Stomach (tissue), 19 donors: ENCODE measurements at regions of chr1 and their contacts with region 1.

Region 1: DNA sequence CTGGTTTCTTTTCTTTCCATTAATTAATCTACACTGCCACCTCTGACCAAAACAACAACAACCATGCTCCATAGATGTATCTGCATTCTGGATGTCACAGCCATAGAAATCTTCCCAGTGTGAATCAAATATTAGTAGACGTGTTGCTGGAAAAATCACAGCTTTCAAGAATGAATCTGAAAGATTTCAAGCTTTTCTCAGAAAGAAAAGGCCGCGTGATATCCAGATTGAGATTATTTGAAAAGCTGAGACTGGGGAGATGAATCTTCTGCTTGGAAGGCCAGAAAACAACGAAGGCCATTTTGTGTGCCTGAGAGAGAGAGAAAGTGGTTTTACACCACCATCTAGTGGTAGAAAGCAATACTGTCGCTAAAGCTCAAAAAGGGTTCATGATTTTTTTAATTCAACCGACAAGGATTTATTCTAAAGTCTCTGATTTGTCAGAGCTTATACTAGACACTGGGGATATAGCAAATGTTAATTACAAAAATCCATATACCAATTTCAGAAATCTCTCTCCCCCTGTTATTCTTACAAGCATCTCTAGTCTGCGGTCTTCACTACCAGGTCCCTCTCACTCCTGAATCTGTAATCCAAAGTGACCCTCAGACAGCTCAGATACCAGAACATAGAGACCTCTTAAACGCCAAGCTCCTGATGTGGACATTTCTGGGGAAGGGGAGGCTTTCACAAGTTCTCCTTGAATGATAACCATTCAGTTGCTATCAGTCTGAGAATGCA is 87.5 kb upstream of the SGIP1 start:
- DNase-seq: peak in 1 of 2 donors; percentile 89
- H3K4me3 ChIP-seq: no peak overlapping the region
- H3K27ac ChIP-seq: peak overlapping the region in 3 of 5 donors; percentile 31 to 71 (median 49)
- H3K4me1 ChIP-seq: peaks cover 6 to 27% (median 11%) of the 10 kb centered on the region in 4 donors
- H3K27me3 ChIP-seq: no peaks in the 10 kb centered on the region
- CTCF ChIP-seq: peak in 5 of 7 experiments; percentile 81 to 90 (median 83)
- EP300 ChIP-seq: no peak
- POLR2A ChIP-seq: no peak

Region 2: GRCh38 chr1:65958561-65959350 is 487.7 kb before region 1 on chr1:
- intact Hi-C with region 1: loop called (anchors 10 kb)
- DNase-seq: peak in 1 of 2 donors; percentile 79
- H3K4me3 ChIP-seq: no peak overlapping the region
- H3K27ac ChIP-seq: no peak overlapping the region
- H3K4me1 ChIP-seq: peaks cover 0 to 10% (median 4%) of the 10 kb centered on the region in 4 donors
- H3K27me3 ChIP-seq: no peaks in the 10 kb centered on the region
- CTCF ChIP-seq: peak in 5 of 7 experiments; percentile 10 to 75 (median 53)
- EP300 ChIP-seq: no peak
- POLR2A ChIP-seq: no peak

Region 3: DNA sequence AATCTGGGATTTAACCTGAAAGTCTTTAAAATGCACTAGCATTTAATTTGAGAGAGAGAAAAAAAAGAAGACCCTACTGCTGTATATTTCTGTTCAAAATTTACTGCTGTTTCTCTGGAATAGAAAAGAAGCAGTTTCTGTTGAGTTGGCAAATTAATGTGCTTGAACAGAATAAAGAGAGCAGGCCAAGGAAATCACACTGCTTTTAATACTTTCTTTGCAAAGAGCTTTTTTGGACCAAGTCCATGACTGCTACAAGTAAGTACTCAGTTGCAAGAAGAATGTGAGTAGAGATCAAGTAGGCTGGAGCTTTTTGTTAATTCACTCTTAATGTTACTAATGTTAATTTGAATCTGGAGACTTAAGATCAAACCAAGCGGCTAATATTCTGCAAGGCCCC is 248.6 kb before region 1 on chr1:
- intact Hi-C with region 1: no loop called
- DNase-seq: peak in 1 of 2 donors; percentile 91
- H3K4me3 ChIP-seq: no peak overlapping the region
- H3K27ac ChIP-seq: no peak overlapping the region
- H3K4me1 ChIP-seq: peaks cover 0 to 17% (median 11%) of the 10 kb centered on the region in 4 donors
- H3K27me3 ChIP-seq: no peaks in the 10 kb centered on the region
- CTCF ChIP-seq: no peak
- EP300 ChIP-seq: no peak
- POLR2A ChIP-seq: no peak

Region 4: DNA sequence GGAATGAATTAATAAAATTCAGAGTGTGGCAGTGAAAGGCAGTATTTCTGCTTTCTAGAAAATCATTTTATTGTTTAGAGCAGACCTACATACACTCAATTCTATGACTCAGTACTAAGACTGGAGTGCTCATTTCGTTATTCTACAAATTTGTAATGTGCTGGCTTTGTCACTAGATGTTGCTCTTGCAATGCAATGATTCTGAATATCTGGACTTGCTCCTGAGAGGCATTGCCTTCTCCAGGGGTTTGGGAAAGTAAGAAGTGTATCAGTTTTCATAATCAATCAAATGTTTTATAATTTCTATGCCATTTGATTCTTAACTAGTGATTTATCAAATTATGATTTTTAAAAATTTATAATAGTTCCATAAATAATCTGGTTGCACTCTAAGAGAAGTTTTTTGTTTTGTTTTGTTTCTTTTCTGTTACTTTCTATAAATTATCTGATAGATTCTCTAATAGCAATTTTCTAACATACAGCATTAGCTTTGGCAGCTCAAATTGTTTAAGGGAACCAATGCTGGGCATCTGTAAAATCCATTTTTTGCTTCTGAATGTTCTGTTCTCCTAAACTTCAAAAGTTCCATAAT is 193.0 kb before region 1 on chr1:
- intact Hi-C with region 1: loop called (anchors 5 kb)
- DNase-seq: peak in 1 of 2 donors; percentile 85
- H3K4me3 ChIP-seq: no peak overlapping the region
- H3K27ac ChIP-seq: no peak overlapping the region
- H3K4me1 ChIP-seq: peaks cover 0 to 10% (median 0%) of the 10 kb centered on the region in 4 donors
- H3K27me3 ChIP-seq: no peaks in the 10 kb centered on the region
- CTCF ChIP-seq: peak in 5 of 7 experiments; percentile 47 to 83 (median 67)
- EP300 ChIP-seq: no peak
- POLR2A ChIP-seq: no peak